ENCODE measurements at regions of chr1 and their contacts with region 1.

Region 1: GRCh38 chr1:172969611-172970010 is 81.1 kb downstream of the TNFSF18 start:
- DNase-seq: no peak
- H3K4me3 Mint-ChIP-seq: no peak overlapping the region
- H3K27ac Mint-ChIP-seq: no peak overlapping the region
- H3K4me1 Mint-ChIP-seq: peaks cover 14% of the 10 kb centered on the region
- H3K27me3 Mint-ChIP-seq: peaks cover 31% of the 10 kb centered on the region

Region 2: GRCh38 chr1:172599912-172600311 is 369.7 kb before region 1 on chr1:
- intact Hi-C with region 1: no loop called
- DNase-seq: no peak
- H3K4me3 Mint-ChIP-seq: no peak overlapping the region
- H3K27ac Mint-ChIP-seq: no peak overlapping the region
- H3K4me1 Mint-ChIP-seq: peaks cover 5% of the 10 kb centered on the region
- H3K27me3 Mint-ChIP-seq: no peaks in the 10 kb centered on the region

Region 3: DNA sequence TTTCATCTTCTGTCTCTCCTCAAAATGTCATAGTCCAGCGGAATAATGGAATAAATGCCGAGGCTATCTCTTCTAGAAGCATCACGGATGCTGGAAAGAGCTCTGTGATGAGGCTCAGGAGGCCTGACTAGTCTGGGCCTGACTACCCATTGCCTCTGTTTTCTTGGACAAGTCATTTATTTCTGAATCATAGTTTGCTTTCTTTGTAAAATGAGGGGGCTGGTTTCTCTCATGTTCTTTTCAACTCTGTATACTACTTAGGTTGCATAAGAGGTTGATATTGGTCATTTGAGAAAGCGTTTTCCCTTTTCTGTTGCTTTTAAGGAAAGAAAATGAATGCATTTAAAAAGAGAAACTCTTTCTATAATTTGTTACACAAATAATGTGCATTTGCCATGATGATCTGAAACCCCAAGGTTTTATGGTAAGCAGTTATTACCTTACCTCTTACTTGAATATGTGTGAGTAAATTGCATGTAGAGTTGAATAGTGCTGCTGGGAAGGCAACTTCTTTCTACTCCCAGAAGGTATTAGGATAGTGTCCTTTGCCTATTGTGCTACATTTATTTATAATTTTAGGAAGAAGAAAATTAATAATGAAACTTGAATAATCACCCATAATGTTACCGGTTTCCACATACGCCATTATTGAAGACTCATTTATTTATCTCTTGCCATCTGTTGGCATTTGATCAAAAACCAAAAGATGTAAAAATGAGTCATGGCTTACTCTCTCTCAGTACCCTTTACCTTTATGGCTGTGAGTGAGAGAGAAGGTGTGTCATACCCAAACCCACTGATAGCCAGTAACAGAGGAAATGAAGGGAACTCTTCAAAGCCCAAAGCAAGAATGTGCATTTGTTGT is 131.6 kb before region 1 on chr1:
- intact Hi-C with region 1: loop called (anchors 5 kb)
- DNase-seq: no peak
- H3K4me3 Mint-ChIP-seq: no peak overlapping the region
- H3K27ac Mint-ChIP-seq: no peak overlapping the region
- H3K4me1 Mint-ChIP-seq: peaks cover 29% of the 10 kb centered on the region
- H3K27me3 Mint-ChIP-seq: peaks cover 53% of the 10 kb centered on the region

Region 4: GRCh38 chr1:172895050-172895460 is 74.6 kb before region 1 on chr1:
- intact Hi-C with region 1: loop called (anchors 2 kb)
- DNase-seq: peak; percentile 20
- H3K4me3 Mint-ChIP-seq: peak overlapping the region; percentile 59
- H3K27ac Mint-ChIP-seq: peak overlapping the region; percentile 0
- H3K4me1 Mint-ChIP-seq: peaks cover 39% of the 10 kb centered on the region
- H3K27me3 Mint-ChIP-seq: peaks cover 46% of the 10 kb centered on the region

Region 5: DNA sequence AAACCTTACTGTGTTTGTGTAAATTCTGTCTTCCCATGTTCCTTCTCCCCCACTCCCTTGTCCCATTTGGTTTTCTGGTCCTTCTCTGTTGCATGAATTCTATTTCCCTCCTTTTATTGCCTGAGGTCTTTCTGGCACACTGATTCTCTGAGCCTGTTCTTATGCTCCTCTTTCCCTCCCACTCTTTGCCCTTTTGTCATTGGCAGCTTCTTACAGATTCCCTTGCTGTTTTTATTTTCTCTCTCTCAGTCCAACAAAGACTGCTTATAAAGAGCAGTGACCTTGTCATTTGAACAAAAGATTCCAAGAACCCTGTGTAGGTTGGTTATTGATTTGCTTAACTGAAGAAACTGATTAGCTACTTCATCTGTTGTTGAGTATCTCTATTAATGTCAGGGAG is 1527.9 kb after region 1 on chr1:
- intact Hi-C with region 1: loop called (anchors 10 kb)
- DNase-seq: no peak
- H3K4me3 Mint-ChIP-seq: no peak overlapping the region
- H3K27ac Mint-ChIP-seq: no peak overlapping the region
- H3K4me1 Mint-ChIP-seq: no peaks in the 10 kb centered on the region
- H3K27me3 Mint-ChIP-seq: no peaks in the 10 kb centered on the region

Measured in activated T-helper 2 cell treated with anti-CD3 and anti-CD28 coated beads, Interferon-gamma antibody, Interleukin-2, Interleukin-4, amounts not matched to agents 10 μg/mL and 5 μg/mL and 100 μg/mL, durations not matched to agents 14 hours and 24 hours and 36 hours (primary cell).